Calu3 (cell line): ENCODE measurements at regions of chr10 and their contacts with region 1.

Region 1: DNA sequence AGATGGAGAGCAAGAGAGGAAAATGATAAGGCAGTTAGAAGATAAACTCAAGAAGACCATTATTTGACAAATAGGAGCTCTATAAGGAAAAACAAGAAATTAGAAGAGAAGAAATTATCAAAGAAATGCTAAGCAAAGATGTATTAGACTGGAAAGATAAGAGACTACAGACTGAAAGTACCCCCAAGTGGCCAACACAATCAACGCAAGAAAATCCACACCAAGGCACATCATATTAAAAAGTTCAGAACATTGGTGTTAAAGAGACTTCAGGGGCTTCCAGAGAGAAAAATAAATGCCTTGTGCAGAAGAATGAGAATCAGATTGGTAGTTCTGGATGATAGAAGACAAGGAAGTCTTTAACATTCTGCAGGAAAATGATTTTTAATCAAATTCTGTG is 46.0 kb downstream of the SH2D4B start:
- DNase-seq: no peak
- H3K4me3 Mint-ChIP-seq: no peak overlapping the region
- H3K27ac Mint-ChIP-seq: no peak overlapping the region
- H3K4me1 Mint-ChIP-seq: no peaks in the 10 kb centered on the region
- H3K27me3 Mint-ChIP-seq: peaks cover 59% of the 10 kb centered on the region
- CTCF ChIP-seq: no peak

Region 2: DNA sequence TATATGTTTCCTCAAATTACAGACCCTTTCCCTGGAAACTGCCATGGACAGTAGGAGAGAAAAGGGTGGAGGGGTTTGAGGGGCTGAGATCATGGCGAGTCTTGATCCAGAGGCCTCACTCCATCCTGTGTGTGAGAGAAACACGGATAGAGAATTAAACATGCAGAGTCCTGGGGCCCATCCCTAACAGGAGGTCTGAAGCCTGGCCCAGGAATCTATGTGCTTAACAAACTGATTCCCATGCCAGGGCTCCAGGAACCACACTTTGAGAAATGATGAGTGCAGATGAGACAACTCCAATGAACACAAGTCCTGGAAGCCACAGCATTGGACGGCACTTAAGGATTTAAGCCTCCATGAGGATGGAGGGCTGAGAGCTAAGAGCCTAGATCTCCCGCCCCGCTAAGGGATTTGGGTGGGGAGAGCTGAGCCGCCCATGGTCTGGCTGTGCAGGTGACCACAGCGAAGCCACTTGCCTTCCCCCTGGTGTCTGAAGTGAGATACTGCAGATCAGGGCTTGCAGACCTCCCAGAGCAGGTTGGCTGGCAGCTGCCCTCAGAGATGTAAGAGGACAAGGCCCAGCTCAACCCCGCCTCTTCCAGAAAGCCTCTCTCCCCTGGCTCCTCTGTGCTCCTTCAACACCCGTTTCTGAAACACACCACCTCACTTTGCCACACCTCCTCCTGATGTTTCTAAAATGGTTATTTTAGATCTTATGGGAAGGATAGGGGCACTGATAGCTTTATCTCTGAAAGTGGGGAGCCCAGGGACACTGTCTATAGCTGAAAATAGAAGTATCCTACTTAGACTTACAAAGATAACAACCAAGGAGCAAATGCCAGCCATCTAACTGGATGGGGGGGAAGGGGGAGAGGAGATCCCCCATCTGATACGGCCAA is 1096.1 kb before region 1 on chr10:
- CTCF ChIA-PET with region 1: no interaction called
- intact Hi-C with region 1: no loop called
- DNase-seq: peak; percentile 78
- H3K4me3 Mint-ChIP-seq: no peak overlapping the region
- H3K27ac Mint-ChIP-seq: no peak overlapping the region
- H3K4me1 Mint-ChIP-seq: peaks cover 13% of the 10 kb centered on the region
- H3K27me3 Mint-ChIP-seq: peaks cover 43% of the 10 kb centered on the region
- CTCF ChIP-seq: peak; percentile 75

Region 3: DNA sequence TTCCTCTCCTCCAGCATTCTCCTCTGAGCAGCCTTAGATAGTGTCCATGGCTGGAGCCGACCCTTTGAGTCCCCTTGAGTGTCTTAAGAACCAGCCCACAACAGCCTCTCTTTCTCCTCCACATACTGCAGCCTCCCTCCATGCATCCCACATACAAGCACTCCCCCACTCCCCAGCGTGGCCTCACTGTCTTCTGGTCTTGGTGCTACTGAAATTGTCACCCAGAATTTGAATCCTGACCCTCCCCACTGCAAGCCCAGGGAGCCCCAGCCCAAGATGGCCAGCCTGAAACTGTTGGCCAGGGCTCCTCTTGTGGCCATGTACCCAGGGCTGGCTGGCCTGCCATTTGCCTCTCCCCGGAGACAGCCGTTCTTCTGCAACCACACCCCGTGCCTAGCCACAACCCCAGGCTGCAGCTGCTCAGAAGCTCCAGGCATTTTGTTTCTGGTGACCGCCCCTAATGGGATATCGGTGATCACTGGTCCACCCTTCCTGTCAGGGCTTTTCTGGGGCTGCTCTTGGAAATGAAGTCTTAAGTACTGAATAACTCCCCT is 64.8 kb before region 1 on chr10:
- CTCF ChIA-PET with region 1: no interaction called
- intact Hi-C with region 1: no loop called
- DNase-seq: no peak
- H3K4me3 Mint-ChIP-seq: no peak overlapping the region
- H3K27ac Mint-ChIP-seq: no peak overlapping the region
- H3K4me1 Mint-ChIP-seq: no peaks in the 10 kb centered on the region
- H3K27me3 Mint-ChIP-seq: no peaks in the 10 kb centered on the region
- CTCF ChIP-seq: no peak

Region 4: GRCh38 chr10:80612261-80612660 is 28.6 kb after region 1 on chr10:
- CTCF ChIA-PET with region 1: no interaction called
- intact Hi-C with region 1: loop called (anchors 1 kb)
- DNase-seq: no peak
- H3K4me3 Mint-ChIP-seq: no peak overlapping the region
- H3K27ac Mint-ChIP-seq: no peak overlapping the region
- H3K4me1 Mint-ChIP-seq: no peaks in the 10 kb centered on the region
- H3K27me3 Mint-ChIP-seq: peaks cover 89% of the 10 kb centered on the region
- CTCF ChIP-seq: no peak

Region 5: DNA sequence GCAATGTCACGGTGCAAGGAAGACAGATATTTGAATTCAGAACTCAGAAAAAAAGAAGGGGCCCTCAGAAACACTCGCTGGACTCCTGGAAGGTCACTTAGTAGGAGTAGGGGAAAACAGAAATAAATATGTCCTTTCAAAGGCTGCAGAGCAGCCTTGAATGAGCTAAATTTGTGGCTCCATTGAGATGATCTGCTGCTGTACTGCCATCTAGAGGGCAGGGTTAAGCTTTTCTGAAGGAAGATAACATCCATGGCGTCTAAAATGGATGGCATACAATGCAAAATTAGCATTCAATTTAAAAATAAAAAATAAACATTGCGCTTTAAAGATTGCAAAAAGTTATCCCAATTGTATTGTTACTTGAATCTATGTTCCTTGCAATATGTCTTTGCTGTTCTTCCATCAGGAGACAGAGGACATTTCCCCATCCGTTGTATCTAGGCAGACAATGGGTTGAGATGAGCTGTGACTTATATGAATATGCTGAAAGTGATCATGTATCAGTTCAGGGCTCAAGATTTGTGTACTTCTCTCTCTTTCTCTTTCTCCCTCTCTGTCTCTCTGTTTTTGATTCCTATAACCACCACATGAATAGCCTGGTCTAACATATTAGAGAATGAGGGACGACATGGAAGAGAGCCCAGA is 596.2 kb after region 1 on chr10:
- CTCF ChIA-PET with region 1: no interaction called
- intact Hi-C with region 1: no loop called
- DNase-seq: peak; percentile 54
- H3K4me3 Mint-ChIP-seq: no peak overlapping the region
- H3K27ac Mint-ChIP-seq: no peak overlapping the region
- H3K4me1 Mint-ChIP-seq: peaks cover 10% of the 10 kb centered on the region
- H3K27me3 Mint-ChIP-seq: no peaks in the 10 kb centered on the region
- CTCF ChIP-seq: peak; percentile 29